Vagina (tissue), 2 donors: ENCODE measurements at regions of chr21 and their contacts with region 1.

Region 1: DNA sequence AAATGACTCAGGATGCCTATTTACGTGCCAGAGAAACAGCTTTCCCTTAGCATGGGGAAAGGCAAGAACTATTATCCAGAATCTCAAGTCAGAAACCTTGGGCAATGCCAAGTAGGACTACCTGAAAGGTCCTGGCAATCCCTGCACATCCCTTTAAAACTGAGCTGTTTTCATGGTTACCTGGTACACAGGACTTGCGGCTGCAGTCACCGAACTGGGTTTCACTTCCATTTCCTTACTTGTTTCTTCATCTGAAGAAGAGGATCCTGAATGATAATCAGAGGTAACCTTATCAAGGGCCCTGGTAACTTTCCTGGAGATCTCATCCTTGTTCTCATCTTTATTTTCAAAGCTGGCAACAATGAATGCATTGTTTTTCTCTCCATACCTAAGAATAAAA is 14.3 kb downstream of the BTG3 start:
- DNase-seq: no peak
- H3K4me3 ChIP-seq: no peak overlapping the region
- H3K27ac ChIP-seq: no peak overlapping the region
- H3K4me1 ChIP-seq: peaks cover 5% of the 10 kb centered on the region
- H3K27me3 ChIP-seq: no peaks in the 10 kb centered on the region
- CTCF ChIP-seq: no peak
- POLR2A ChIP-seq: no peak

Region 2: GRCh38 chr21:17387030-17387617 is 211.3 kb before region 1 on chr21:
- intact Hi-C with region 1: loop called (anchors 10 kb)
- DNase-seq: no peak
- H3K4me3 ChIP-seq: no peak overlapping the region
- H3K27ac ChIP-seq: no peak overlapping the region
- H3K4me1 ChIP-seq: no peaks in the 10 kb centered on the region
- H3K27me3 ChIP-seq: no peaks in the 10 kb centered on the region
- CTCF ChIP-seq: peak; percentile 68 to 87 (median 81)
- POLR2A ChIP-seq: no peak